CD8-positive, alpha-beta T cell (primary cell): ENCODE measurements at regions of chr9 and their contacts with region 1.

Region 1: DNA sequence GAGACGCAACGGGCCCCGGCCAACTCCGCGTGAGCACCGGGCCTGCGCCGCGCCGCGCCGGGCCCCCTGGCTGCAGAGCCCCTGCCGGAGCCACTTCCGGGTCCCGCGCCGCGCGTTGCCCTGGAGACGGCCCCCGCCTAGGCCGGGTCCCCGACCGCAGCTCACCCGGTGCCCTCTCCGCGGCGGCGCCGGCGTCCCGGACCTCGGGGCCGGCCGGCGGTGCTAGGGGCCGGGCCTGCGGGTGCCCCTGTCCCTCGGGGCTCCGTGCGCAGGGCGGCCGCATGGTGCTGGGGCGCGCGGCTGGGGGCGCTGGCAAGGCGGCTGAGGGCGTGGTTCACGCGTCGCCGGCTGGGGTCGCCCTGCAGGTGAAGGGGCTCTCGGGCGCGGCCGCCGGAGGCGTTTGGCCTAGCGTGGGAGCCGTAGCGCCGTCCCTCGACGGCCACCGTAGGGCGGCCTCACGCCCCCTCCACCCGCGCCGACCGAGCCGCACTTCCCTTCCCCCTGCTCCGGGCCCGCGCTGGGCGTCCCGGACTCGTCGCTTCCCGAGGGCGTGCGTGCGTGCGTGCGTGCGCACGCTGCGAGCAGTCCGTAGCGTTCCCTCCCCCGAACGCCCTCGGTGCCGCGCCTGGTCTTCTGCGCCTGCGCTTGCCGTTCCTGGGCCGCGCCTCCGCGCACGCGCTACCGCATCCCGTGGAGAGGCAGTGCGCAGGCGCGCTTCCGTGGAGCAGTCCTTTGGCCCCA is at the start of gene TMEM250:
- DNase-seq: peak; percentile 90 to 98 (median 95)
- ATAC-seq: peak; percentile 92
- H3K4me3 ChIP-seq: peak within 1 kb of the TSS; percentile 50 to 90
- H3K4me3 Mint-ChIP-seq: peak within 1 kb of the TSS; percentile 82
- H3K27ac ChIP-seq: peak within 1 kb of the TSS; percentile 66 to 79
- H3K27ac Mint-ChIP-seq: peak within 1 kb of the TSS; percentile 80
- H3K4me1 ChIP-seq: peaks cover 38% of the 10 kb centered on the region
- H3K4me1 Mint-ChIP-seq: peaks cover 21% of the 10 kb centered on the region
- H3K27me3 ChIP-seq: no peaks in the 10 kb centered on the region
- H3K27me3 Mint-ChIP-seq: no peaks in the 10 kb centered on the region
- CTCF ChIP-seq: no peak
- total RNA-seq, gene TMEM250: 7.6 to 7.7 TPM

Region 2: GRCh38 chr9:135602789-135603481 is 515.6 kb before region 1 on chr9:
- CTCF ChIA-PET with region 1: no interaction called
- POLR2A ChIA-PET with region 1: no interaction called
- intact Hi-C with region 1: loop called in 1 of 2 experiments (anchors 10 kb)
- DNase-seq: peak in 8 of 9 experiments; percentile 30 to 70 (median 56)
- ATAC-seq: no peak
- H3K4me3 ChIP-seq: no peak overlapping the region
- H3K4me3 Mint-ChIP-seq: no peak overlapping the region
- H3K27ac ChIP-seq: no peak overlapping the region
- H3K27ac Mint-ChIP-seq: no peak overlapping the region
- H3K4me1 ChIP-seq: no peaks in the 10 kb centered on the region
- H3K4me1 Mint-ChIP-seq: no peaks in the 10 kb centered on the region
- H3K27me3 ChIP-seq: peaks cover 0 to 3% of the 10 kb centered on the region in 2 experiments
- H3K27me3 Mint-ChIP-seq: peaks cover 15% of the 10 kb centered on the region
- CTCF ChIP-seq: peak; percentile 77

Region 3: DNA sequence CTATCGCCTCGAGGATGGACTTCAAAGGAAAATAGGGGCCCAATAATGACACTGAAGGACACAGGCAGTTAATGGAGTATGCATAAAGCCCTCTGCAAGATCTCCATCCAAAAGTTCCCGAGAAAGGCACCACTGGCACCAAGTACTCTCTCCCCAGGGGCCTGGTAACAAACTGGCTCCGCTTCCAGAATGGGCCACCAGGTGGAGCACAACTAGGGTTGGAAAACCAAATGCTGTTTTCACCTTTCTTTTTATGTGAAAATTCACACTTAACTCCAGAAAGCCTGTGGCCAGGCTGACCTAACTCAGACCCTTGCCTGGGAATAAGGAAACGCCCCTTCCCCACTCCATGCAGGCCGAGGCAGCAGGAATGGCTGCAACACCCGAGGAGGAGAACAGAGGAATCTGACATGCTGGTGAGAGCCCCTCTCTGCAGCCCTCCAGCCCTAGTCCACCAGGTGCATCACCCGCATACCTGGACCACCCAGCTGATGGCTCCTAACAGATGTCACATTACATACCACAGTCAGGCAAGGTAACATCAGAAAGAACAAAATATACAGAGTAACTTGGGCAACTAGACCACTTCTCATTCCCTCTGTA is 253.9 kb before region 1 on chr9:
- CTCF ChIA-PET with region 1: interaction called, 10 read pairs
- POLR2A ChIA-PET with region 1: no interaction called
- intact Hi-C with region 1: loop called (anchors 1 to 2 kb)
- DNase-seq: peak; percentile 52 to 82 (median 65)
- ATAC-seq: peak; percentile 66
- H3K4me3 ChIP-seq: no peak overlapping the region
- H3K4me3 Mint-ChIP-seq: no peak overlapping the region
- H3K27ac ChIP-seq: no peak overlapping the region
- H3K27ac Mint-ChIP-seq: peak overlapping the region; percentile 32
- H3K4me1 ChIP-seq: no peaks in the 10 kb centered on the region
- H3K4me1 Mint-ChIP-seq: peaks cover 17% of the 10 kb centered on the region
- H3K27me3 ChIP-seq: no peaks in the 10 kb centered on the region
- H3K27me3 Mint-ChIP-seq: no peaks in the 10 kb centered on the region
- CTCF ChIP-seq: peak; percentile 87

Region 4: GRCh38 chr9:135971892-135972291 is 146.6 kb before region 1 on chr9:
- CTCF ChIA-PET with region 1: interaction called, 84 read pairs
- POLR2A ChIA-PET with region 1: no interaction called
- intact Hi-C with region 1: loop called (anchors 1 kb)
- DNase-seq: peak in 6 of 9 experiments; percentile 16 to 74 (median 66)
- ATAC-seq: peak; percentile 60
- H3K4me3 ChIP-seq: no peak overlapping the region
- H3K4me3 Mint-ChIP-seq: no peak overlapping the region
- H3K27ac ChIP-seq: no peak overlapping the region
- H3K27ac Mint-ChIP-seq: no peak overlapping the region
- H3K4me1 ChIP-seq: peaks cover 9% of the 10 kb centered on the region
- H3K4me1 Mint-ChIP-seq: peaks cover 6% of the 10 kb centered on the region
- H3K27me3 ChIP-seq: no peaks in the 10 kb centered on the region
- H3K27me3 Mint-ChIP-seq: peaks cover 2% of the 10 kb centered on the region
- CTCF ChIP-seq: no peak

Region 5: GRCh38 chr9:136051517-136052432 is 66.7 kb before region 1 on chr9:
- CTCF ChIA-PET with region 1: interaction called, 4 read pairs
- POLR2A ChIA-PET with region 1: no interaction called
- intact Hi-C with region 1: loop called in 1 of 2 experiments (anchors 2 kb)
- DNase-seq: peak in 1 of 9 experiments; percentile 34
- ATAC-seq: peak; percentile 56
- H3K4me3 ChIP-seq: peak overlapping the region in 1 of 2 experiments; percentile 23
- H3K4me3 Mint-ChIP-seq: peak overlapping the region; percentile 75
- H3K27ac ChIP-seq: no peak overlapping the region
- H3K27ac Mint-ChIP-seq: no peak overlapping the region
- H3K4me1 ChIP-seq: peaks cover 36% of the 10 kb centered on the region
- H3K4me1 Mint-ChIP-seq: peaks cover 13% of the 10 kb centered on the region
- H3K27me3 ChIP-seq: peaks cover 2 to 16% of the 10 kb centered on the region in 2 experiments
- H3K27me3 Mint-ChIP-seq: peaks cover 11% of the 10 kb centered on the region
- CTCF ChIP-seq: no peak

Region 6: GRCh38 chr9:136245219-136246150 is 127.0 kb after region 1 on chr9 and contains the start of gene QSOX2:
- CTCF ChIA-PET with region 1: no interaction called
- POLR2A ChIA-PET with region 1: no interaction called
- intact Hi-C with region 1: loop called in 1 of 2 experiments (anchors 5 kb)
- DNase-seq: peak; percentile 69 to 93 (median 82)
- ATAC-seq: peak; percentile 84
- H3K4me3 ChIP-seq: peak within 1 kb of the TSS; percentile 40 to 60
- H3K4me3 Mint-ChIP-seq: peak within 1 kb of the TSS; percentile 91
- H3K27ac ChIP-seq: peak within 1 kb of the TSS; percentile 33 to 37
- H3K27ac Mint-ChIP-seq: peak within 1 kb of the TSS; percentile 85
- H3K4me1 ChIP-seq: peaks cover 35% of the 10 kb centered on the region
- H3K4me1 Mint-ChIP-seq: peaks cover 32% of the 10 kb centered on the region
- H3K27me3 ChIP-seq: no peaks in the 10 kb centered on the region
- H3K27me3 Mint-ChIP-seq: no peaks in the 10 kb centered on the region
- CTCF ChIP-seq: no peak
- total RNA-seq, gene QSOX2: 13.8 to 14.2 TPM